ENCODE measurements at regions of chr6 and their contacts with region 1.

Region 1: GRCh38 chr6:110537208-110538123 is 61.1 kb upstream of the SLC22A16 start:
- DNase-seq: no peak
- H3K4me3 ChIP-seq: no peak overlapping the region
- H3K27ac ChIP-seq: peak overlapping the region; percentile 58
- H3K4me1 ChIP-seq: peaks cover 7% of the 10 kb centered on the region
- H3K27me3 ChIP-seq: no peaks in the 10 kb centered on the region
- CTCF ChIP-seq: no peak

Region 2: GRCh38 chr6:110682460-110682853 is 145.0 kb after region 1 on chr6:
- intact Hi-C with region 1: loop called (anchors 10 kb)
- DNase-seq: no peak
- H3K4me3 ChIP-seq: no peak overlapping the region
- H3K27ac ChIP-seq: peak overlapping the region; percentile 67
- H3K4me1 ChIP-seq: peaks cover 15% of the 10 kb centered on the region
- H3K27me3 ChIP-seq: no peaks in the 10 kb centered on the region
- CTCF ChIP-seq: peak; percentile 78

Region 3: GRCh38 chr6:110958329-110959192 is 421.1 kb after region 1 on chr6 and contains the start of gene GTF3C6:
- intact Hi-C with region 1: loop called (anchors 10 kb)
- DNase-seq: peak; percentile 95
- H3K4me3 ChIP-seq: peak within 1 kb of the TSS; percentile 84
- H3K27ac ChIP-seq: peak within 1 kb of the TSS; percentile 94
- H3K4me1 ChIP-seq: peaks cover 18% of the 10 kb centered on the region
- H3K27me3 ChIP-seq: no peaks in the 10 kb centered on the region
- CTCF ChIP-seq: peak; percentile 15
- total RNA-seq, gene GTF3C6: 102 TPM

Measured in left ventricle myocardium inferior (tissue), 1 donor.